Sciatic nerve (tissue), 2 donors: ENCODE measurements at regions of chr1 and their contacts with region 1.

Region 1: DNA sequence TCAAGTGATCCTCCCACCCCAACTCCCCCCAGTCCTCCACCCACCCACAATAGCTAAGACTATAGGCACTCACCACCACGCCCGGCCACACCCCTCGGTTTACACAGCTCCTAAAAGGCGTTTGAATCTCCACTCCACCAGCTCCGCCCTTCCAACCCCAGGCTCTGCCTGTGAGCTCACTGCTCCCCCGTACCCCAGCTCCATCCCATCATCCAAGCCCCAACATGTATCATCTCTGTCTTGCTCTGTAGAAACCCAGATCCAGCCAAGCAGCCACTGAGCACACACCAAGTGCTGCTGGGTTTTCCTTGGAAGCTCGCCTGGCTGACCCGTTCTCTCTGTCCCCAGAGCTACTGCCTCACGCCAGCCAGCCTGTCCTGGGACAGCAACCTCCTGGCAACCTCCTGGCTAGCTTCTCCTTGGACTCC is 12.0 kb upstream of the S100A2 start:
- DNase-seq: peak; percentile 56
- ATAC-seq: peak; percentile 75

Region 2: DNA sequence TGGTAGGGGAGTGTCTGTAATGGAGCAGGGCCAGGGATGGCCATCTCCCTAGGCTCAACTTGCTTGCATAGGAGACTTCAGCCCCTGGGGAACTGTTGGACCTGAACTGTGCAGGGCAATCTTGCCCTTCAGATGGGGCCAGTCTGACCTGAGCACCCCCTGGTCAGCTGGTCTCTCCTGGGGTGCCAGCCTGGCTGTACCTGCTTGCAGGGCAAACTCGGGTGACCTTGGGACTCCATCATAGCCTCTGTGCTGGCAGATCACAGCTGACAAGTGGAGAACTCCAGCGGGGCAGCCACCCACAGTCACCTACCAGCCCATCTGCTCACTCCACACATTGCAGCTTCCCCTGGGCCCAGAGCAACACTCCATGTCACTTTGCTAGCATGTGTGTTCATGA is 528.4 kb before region 1 on chr1:
- intact Hi-C with region 1: no loop called
- DNase-seq: no peak
- ATAC-seq: no peak

Region 3: GRCh38 chr1:153617675-153618074 is 40.0 kb after region 1 on chr1:
- intact Hi-C with region 1: loop called (anchors 5 kb)
- DNase-seq: peak; percentile 79
- ATAC-seq: peak; percentile 35